ENCODE measurements at regions of chr3 and their contacts with region 1.

Region 1: GRCh38 chr3:149936812-149937233 is 33.9 kb downstream of the PFN2 start:
- DNase-seq: peak; percentile 56 to 60
- H3K4me3 ChIP-seq: no peak overlapping the region
- H3K4me3 Mint-ChIP-seq: no peak overlapping the region
- H3K27ac Mint-ChIP-seq: no peak overlapping the region
- H3K4me1 ChIP-seq: no peaks in the 10 kb centered on the region
- H3K4me1 Mint-ChIP-seq: peaks cover 16% of the 10 kb centered on the region
- H3K27me3 ChIP-seq: no peaks in the 10 kb centered on the region
- H3K27me3 Mint-ChIP-seq: no peaks in the 10 kb centered on the region
- CTCF ChIP-seq: peak; percentile 85

Region 2: DNA sequence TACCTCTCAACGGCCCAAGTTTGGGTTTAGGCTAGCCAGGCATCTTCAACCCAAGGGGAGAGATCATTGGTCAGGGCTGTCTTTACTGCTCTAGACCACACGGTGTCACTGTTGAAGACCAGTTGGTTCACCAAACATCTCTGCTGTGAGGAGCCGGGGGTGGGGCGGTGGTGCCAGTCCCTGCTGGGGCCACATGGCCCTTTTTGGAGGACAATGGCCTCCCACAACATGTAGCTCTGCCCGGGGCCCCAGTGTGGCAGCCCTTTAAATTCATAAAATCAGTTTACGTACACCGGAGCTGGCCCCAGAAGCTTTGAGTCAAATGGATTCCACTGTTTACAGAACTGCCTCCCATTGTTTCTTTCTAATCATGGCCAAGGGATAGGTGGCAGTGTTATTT is 584.3 kb before region 1 on chr3:
- CTCF ChIA-PET with region 1: no interaction called
- POLR2A ChIA-PET with region 1: no interaction called
- intact Hi-C with region 1: no loop called
- DNase-seq: peak; percentile 74 to 76
- H3K4me3 ChIP-seq: no peak overlapping the region
- H3K4me3 Mint-ChIP-seq: no peak overlapping the region
- H3K27ac Mint-ChIP-seq: no peak overlapping the region
- H3K4me1 ChIP-seq: peaks cover 22% of the 10 kb centered on the region
- H3K4me1 Mint-ChIP-seq: peaks cover 29% of the 10 kb centered on the region
- H3K27me3 ChIP-seq: no peaks in the 10 kb centered on the region
- H3K27me3 Mint-ChIP-seq: no peaks in the 10 kb centered on the region
- CTCF ChIP-seq: peak; percentile 72 to 73

Region 3: GRCh38 chr3:149969940-149970715 is 33.3 kb after region 1 on chr3:
- CTCF ChIA-PET with region 1: no interaction called
- POLR2A ChIA-PET with region 1: no interaction called
- intact Hi-C with region 1: loop called (anchors 1 kb)
- DNase-seq: peak; percentile 77 to 84
- H3K4me3 ChIP-seq: peak overlapping the region; percentile 91
- H3K4me3 Mint-ChIP-seq: peak overlapping the region; percentile 78
- H3K27ac Mint-ChIP-seq: peak overlapping the region; percentile 84
- H3K4me1 ChIP-seq: no peaks in the 10 kb centered on the region
- H3K4me1 Mint-ChIP-seq: no peaks in the 10 kb centered on the region
- H3K27me3 ChIP-seq: no peaks in the 10 kb centered on the region
- H3K27me3 Mint-ChIP-seq: peaks cover 3% of the 10 kb centered on the region
- CTCF ChIP-seq: no peak

Region 4: GRCh38 chr3:150132101-150132749 is 195.4 kb after region 1 on chr3:
- CTCF ChIA-PET with region 1: no interaction called
- POLR2A ChIA-PET with region 1: no interaction called
- intact Hi-C with region 1: no loop called
- DNase-seq: no peak
- H3K4me3 ChIP-seq: no peak overlapping the region
- H3K4me3 Mint-ChIP-seq: no peak overlapping the region
- H3K27ac Mint-ChIP-seq: no peak overlapping the region
- H3K4me1 ChIP-seq: no peaks in the 10 kb centered on the region
- H3K4me1 Mint-ChIP-seq: no peaks in the 10 kb centered on the region
- H3K27me3 ChIP-seq: no peaks in the 10 kb centered on the region
- H3K27me3 Mint-ChIP-seq: peaks cover 10% of the 10 kb centered on the region
- CTCF ChIP-seq: no peak

Measured in Caco-2 (cell line).